ENCODE measurements at regions of chr10 and their contacts with region 1.

Region 1: DNA sequence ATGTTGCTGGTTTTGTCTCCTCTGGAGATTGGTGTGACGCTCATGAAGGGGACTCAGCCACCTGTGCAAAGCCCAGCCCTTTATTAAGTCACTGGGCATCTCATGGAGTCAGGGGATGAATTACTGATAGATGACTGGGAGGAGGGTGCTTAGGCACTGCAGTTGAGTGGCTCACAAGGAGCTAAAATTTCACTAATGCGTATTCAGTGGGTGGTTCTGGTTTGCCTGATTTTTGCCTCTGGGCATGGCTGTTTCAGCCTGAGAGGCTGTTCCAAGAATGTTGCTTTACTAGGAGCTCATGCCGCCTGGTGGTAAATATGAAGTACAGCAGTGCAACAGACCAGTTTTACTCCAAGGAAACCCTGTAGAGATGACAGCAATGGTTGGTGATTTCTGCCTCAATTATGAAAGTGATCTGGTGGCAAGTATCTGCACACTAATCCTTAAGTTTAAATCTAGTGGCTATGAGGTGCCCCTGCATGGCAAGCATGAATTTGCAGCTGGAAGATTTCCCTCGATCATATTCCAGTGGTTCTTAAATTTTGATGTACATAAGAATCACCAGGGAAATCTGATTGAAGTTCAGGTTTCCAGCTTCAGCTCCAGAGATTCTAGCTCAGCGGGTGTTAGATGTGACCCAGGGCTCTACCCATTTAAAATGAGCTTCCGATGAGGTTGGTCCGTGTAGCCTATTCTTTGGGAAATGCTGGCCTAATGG is 19.9 kb downstream of the ACTA2 start:
- DNase-seq: peak; percentile 58
- H3K4me3 Mint-ChIP-seq: no peak overlapping the region
- H3K27ac Mint-ChIP-seq: no peak overlapping the region
- H3K4me1 Mint-ChIP-seq: peaks cover 18% of the 10 kb centered on the region
- H3K27me3 Mint-ChIP-seq: no peaks in the 10 kb centered on the region

Region 2: DNA sequence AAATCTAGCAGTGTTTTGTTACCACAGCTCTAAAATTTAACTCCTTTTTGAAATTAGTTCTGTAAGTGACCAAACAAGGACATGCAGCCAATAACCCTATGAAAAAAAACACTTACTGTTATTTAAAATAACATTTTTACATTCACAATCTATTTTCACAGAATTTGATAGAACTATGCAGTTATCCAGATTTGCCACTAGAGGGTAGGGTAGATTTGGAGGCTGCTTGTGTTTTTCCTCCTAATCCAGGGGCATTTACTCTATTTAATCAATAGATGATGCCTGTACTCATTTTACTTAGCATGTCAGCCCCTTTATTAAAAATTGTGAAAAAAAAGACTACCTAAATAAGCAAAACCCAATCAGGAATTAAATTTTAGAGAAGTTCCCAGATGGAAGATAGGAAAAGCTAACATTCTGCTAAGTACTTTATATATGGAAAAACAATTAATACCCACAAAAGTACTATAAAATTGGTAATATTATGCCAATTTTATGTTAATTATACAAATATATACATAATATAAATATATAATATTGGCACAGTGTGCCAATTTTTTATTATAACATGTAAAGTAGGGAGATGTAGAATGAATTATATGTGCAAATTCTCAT is 244.7 kb before region 1 on chr10:
- CTCF ChIA-PET with region 1: interaction called, 6 read pairs
- intact Hi-C with region 1: loop called (anchors 1 kb)
- DNase-seq: no peak
- H3K4me3 Mint-ChIP-seq: no peak overlapping the region
- H3K27ac Mint-ChIP-seq: no peak overlapping the region
- H3K4me1 Mint-ChIP-seq: no peaks in the 10 kb centered on the region
- H3K27me3 Mint-ChIP-seq: peaks cover 8% of the 10 kb centered on the region

Region 3: GRCh38 chr10:88880282-88881076 is 52.2 kb before region 1 on chr10:
- CTCF ChIA-PET with region 1: interaction called, 37 read pairs
- intact Hi-C with region 1: loop called (anchors 1 kb)
- DNase-seq: peak; percentile 82
- H3K4me3 Mint-ChIP-seq: peak overlapping the region; percentile 95
- H3K27ac Mint-ChIP-seq: peak overlapping the region; percentile 97
- H3K4me1 Mint-ChIP-seq: peaks cover 58% of the 10 kb centered on the region
- H3K27me3 Mint-ChIP-seq: no peaks in the 10 kb centered on the region

Region 4: GRCh38 chr10:88944813-88945212 is 12.1 kb after region 1 on chr10:
- CTCF ChIA-PET with region 1: interaction called, 63 read pairs
- intact Hi-C with region 1: no loop called
- DNase-seq: no peak
- H3K4me3 Mint-ChIP-seq: no peak overlapping the region
- H3K27ac Mint-ChIP-seq: no peak overlapping the region
- H3K4me1 Mint-ChIP-seq: peaks cover 9% of the 10 kb centered on the region
- H3K27me3 Mint-ChIP-seq: no peaks in the 10 kb centered on the region

Region 5: GRCh38 chr10:89029785-89030437 is 97.2 kb after region 1 on chr10:
- CTCF ChIA-PET with region 1: interaction called, 28 read pairs
- intact Hi-C with region 1: loop called (anchors 1 kb)
- DNase-seq: peak; percentile 85
- H3K4me3 Mint-ChIP-seq: no peak overlapping the region
- H3K27ac Mint-ChIP-seq: no peak overlapping the region
- H3K4me1 Mint-ChIP-seq: peaks cover 22% of the 10 kb centered on the region
- H3K27me3 Mint-ChIP-seq: no peaks in the 10 kb centered on the region

Region 6: DNA sequence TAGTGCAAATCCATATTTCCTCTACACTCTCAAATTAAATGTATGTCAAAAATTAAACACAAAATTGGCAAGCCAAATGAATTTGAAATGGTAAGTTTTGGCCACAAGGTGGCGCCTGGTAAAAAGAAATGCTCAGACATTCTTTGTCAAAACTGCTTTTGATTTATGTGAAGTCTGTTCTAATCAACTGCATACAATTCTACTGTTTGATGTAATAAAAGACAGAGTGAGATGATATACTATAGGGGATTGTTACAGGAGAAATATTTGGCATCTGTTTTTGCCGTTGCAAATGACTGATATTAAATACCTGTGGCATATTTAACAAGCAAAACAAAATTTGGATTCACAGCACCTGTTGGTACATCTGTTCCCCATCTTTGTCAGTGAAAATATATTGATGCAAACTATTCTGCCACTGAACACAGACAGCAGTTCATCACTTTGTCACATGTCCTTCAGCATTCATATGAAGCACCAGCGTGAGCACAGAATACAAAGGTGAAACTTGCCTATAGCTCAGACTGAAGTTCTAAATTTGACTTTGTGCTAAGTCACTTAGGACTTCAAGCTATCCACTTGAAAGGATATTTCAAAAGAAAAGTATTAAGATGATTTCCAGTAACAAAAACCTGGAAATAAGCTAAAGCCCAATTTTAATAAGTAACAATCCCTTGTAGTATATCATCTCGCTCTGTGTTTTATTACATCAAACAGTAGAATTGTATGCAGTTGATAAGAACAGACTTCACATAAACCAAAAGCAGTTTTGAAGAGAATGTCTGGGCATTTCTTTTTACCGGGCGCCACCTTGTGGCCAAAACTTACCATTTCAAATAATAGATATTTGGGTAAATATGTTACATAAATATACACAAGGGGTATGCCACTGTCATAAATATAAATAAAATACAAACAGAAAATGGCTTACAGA is 284.6 kb after region 1 on chr10:
- CTCF ChIA-PET with region 1: interaction called, 68 read pairs
- intact Hi-C with region 1: loop called (anchors 1 kb)
- DNase-seq: peak; percentile 81
- H3K4me3 Mint-ChIP-seq: no peak overlapping the region
- H3K27ac Mint-ChIP-seq: no peak overlapping the region
- H3K4me1 Mint-ChIP-seq: peaks cover 7% of the 10 kb centered on the region
- H3K27me3 Mint-ChIP-seq: peaks cover 2% of the 10 kb centered on the region